RWPE1 (cell line): ENCODE measurements at regions of chr16 and their contacts with region 1.

Region 1: GRCh38 chr16:16163571-16163970 is 59.7 kb downstream of the ABCC6 start:
- DNase-seq: no peak
- H3K27ac ChIP-seq: no peak overlapping the region
- CTCF ChIP-seq: no peak

Region 2: GRCh38 chr16:16191493-16192167 is 28.1 kb after region 1 on chr16:
- CTCF ChIA-PET with region 1: no interaction called
- POLR2A ChIA-PET with region 1: interaction called, 17 read pairs
- DNase-seq: no peak
- H3K27ac ChIP-seq: no peak overlapping the region
- CTCF ChIP-seq: no peak